Heart right ventricle (tissue), 16 donors: ENCODE measurements at regions of chr10 and their contacts with region 1.

Region 1: DNA sequence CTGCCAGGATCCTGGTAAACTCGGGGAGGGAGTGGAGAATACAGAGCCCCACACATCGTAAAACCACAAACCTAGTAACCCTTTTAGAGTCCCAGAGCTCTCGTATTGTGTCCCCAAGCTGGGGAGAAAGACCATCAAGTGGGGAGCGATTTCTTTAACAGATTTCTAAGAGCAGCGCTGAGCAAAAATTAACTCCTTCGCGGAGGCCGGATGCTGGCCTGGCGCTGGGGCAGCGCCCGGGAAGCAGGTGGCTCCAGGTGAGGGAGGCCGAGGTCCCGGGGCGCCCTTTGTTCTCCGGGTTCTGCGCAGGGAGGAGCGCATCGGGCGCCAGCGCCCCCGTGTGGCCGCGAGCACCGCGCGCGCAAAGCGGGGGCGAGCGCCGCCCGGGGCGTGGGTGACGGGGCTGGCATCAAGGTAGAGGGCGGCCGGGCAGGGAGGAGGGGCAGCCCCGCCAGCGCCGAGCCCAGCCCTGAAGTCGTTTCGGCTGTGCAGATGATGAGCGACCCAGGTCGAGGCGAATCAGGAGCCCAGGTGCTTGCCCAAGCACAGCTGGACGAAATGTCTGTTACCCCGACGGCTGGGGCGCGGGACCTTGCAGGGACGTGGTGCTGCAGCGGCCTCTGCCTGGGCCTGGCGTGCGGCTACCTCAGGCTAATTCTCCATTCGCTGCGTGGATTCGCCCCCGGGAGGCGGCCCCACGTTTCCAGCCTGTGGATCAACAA is 10.4 kb upstream of the FGFR2 start:
- DNase-seq: peak in 1 of 2 donors; percentile 49
- ATAC-seq: peak; percentile 70 to 91 (median 78)
- H3K4me3 ChIP-seq: peak overlapping the region in 9 of 10 donors; percentile 19 to 43 (median 31)
- H3K27ac ChIP-seq: no peak overlapping the region
- H3K4me1 ChIP-seq: peaks cover 0 to 6% (median 5%) of the 10 kb centered on the region in 9 donors
- H3K27me3 ChIP-seq: peaks cover 0 to 68% (median 44%) of the 10 kb centered on the region in 7 donors
- CTCF ChIP-seq: peak; percentile 75 to 90 (median 88)

Region 2: GRCh38 chr10:121644501-121644900 is 35.9 kb after region 1 on chr10:
- intact Hi-C with region 1: loop called in 1 of 10 experiments (anchors 1 kb)
- DNase-seq: no peak
- ATAC-seq: no peak
- H3K4me3 ChIP-seq: no peak overlapping the region
- H3K27ac ChIP-seq: no peak overlapping the region
- H3K4me1 ChIP-seq: no peaks in the 10 kb centered on the region
- H3K27me3 ChIP-seq: peaks cover 0 to 20% (median 8%) of the 10 kb centered on the region in 7 donors
- CTCF ChIP-seq: no peak